OCI-LY7 (cell line): ENCODE measurements at regions of chr2 and their contacts with region 1.

Region 1: GRCh38 chr2:60353406-60353800 is 200.1 kb downstream of the BCL11A start:
- DNase-seq: peak; percentile 78
- H3K4me3 ChIP-seq: peak overlapping the region; percentile 61
- H3K27ac ChIP-seq: peak overlapping the region; percentile 98
- H3K4me1 ChIP-seq: peaks cover 97% of the 10 kb centered on the region
- CTCF ChIP-seq: peak; percentile 56

Region 2: GRCh38 chr2:60213865-60214625 is 139.4 kb before region 1 on chr2:
- CTCF ChIA-PET with region 1: no interaction called
- POLR2A ChIA-PET with region 1: no interaction called
- intact Hi-C with region 1: no loop called
- DNase-seq: no peak
- H3K4me3 ChIP-seq: no peak overlapping the region
- H3K27ac ChIP-seq: no peak overlapping the region
- H3K4me1 ChIP-seq: no peaks in the 10 kb centered on the region
- CTCF ChIP-seq: no peak

Region 3: DNA sequence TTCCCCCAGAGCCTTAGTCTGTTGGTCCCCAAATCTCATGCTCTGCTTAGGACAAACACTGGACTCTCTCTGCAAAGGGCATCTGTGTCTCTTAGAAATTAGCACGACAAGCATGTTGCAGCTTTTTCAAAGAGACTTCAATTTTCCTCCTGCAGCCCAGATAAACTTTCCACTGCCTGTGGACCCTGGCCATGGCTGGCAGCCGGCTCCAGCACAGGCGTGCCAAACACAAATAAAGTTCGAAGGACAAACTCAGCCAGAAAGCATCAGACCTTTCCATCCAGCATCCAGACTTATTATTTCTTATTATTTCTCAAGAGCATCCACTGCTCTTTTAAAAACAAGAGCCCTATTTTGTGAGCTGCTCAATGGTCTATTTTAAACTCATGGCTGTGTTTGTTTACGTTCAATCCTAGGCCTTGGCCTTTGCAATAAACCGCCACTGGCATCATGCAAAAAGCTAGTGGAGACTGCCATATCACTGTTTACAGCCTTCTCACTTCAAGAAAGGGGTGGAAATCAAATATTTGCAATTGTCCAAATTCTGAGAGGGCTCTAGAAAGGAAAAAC is 100.7 kb before region 1 on chr2:
- CTCF ChIA-PET with region 1: no interaction called
- POLR2A ChIA-PET with region 1: no interaction called
- intact Hi-C with region 1: no loop called
- DNase-seq: no peak
- H3K4me3 ChIP-seq: no peak overlapping the region
- H3K27ac ChIP-seq: no peak overlapping the region
- H3K4me1 ChIP-seq: no peaks in the 10 kb centered on the region
- CTCF ChIP-seq: no peak

Region 4: GRCh38 chr2:60312618-60313017 is 40.8 kb before region 1 on chr2:
- CTCF ChIA-PET with region 1: interaction called, 5 read pairs
- POLR2A ChIA-PET with region 1: interaction called, 80 read pairs
- intact Hi-C with region 1: no loop called
- DNase-seq: no peak
- H3K4me3 ChIP-seq: no peak overlapping the region
- H3K27ac ChIP-seq: peak overlapping the region; percentile 41
- H3K4me1 ChIP-seq: peaks cover 100% of the 10 kb centered on the region
- CTCF ChIP-seq: no peak

Region 5: GRCh38 chr2:60337140-60337494 is 16.3 kb before region 1 on chr2:
- CTCF ChIA-PET with region 1: interaction called, 4 read pairs
- POLR2A ChIA-PET with region 1: interaction called, 76 read pairs
- intact Hi-C with region 1: no loop called
- DNase-seq: peak; percentile 54
- H3K4me3 ChIP-seq: no peak overlapping the region
- H3K27ac ChIP-seq: peak overlapping the region; percentile 64
- H3K4me1 ChIP-seq: peaks cover 24% of the 10 kb centered on the region
- CTCF ChIP-seq: peak; percentile 51

Region 6: GRCh38 chr2:60439219-60439974 is 86.0 kb after region 1 on chr2:
- CTCF ChIA-PET with region 1: interaction called, 14 read pairs
- POLR2A ChIA-PET with region 1: interaction called, 34 read pairs
- intact Hi-C with region 1: loop called (anchors 1 kb)
- DNase-seq: peak; percentile 96
- H3K4me3 ChIP-seq: peak overlapping the region; percentile 41
- H3K27ac ChIP-seq: peak overlapping the region; percentile 65
- H3K4me1 ChIP-seq: peaks cover 66% of the 10 kb centered on the region
- CTCF ChIP-seq: peak; percentile 77

Region 7: DNA sequence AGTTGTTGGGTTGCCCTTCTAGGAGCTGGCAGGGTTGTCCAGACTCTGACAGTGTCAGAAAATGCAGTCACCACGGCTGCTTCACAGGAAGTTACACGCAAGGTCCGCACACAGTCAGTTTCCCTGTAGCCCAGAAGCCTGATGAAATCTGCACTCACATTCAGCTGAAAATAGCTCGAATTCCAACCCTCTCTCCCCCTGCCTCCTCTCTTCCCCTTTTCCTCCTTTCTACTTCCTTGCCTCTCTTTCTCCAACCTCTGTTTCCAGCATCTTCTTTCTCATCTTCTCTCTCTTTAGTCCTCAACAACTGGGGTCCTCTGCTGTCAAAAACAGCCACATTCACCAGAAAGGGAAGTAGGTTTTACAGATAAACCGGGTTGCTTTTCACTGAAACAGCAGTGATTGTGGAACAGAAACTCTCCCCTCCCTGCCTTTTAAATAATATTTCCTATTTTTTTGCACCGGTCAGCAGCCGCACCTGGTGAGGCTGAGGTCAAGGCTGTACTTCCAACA is 130.8 kb after region 1 on chr2:
- CTCF ChIA-PET with region 1: interaction called, 3 read pairs
- POLR2A ChIA-PET with region 1: no interaction called
- intact Hi-C with region 1: loop called (anchors 1 kb)
- DNase-seq: peak; percentile 80
- H3K4me3 ChIP-seq: peak overlapping the region; percentile 51
- H3K27ac ChIP-seq: peak overlapping the region; percentile 82
- H3K4me1 ChIP-seq: peaks cover 45% of the 10 kb centered on the region
- CTCF ChIP-seq: peak; percentile 26; the same call in 1 of the 2 replicates

Region 8: DNA sequence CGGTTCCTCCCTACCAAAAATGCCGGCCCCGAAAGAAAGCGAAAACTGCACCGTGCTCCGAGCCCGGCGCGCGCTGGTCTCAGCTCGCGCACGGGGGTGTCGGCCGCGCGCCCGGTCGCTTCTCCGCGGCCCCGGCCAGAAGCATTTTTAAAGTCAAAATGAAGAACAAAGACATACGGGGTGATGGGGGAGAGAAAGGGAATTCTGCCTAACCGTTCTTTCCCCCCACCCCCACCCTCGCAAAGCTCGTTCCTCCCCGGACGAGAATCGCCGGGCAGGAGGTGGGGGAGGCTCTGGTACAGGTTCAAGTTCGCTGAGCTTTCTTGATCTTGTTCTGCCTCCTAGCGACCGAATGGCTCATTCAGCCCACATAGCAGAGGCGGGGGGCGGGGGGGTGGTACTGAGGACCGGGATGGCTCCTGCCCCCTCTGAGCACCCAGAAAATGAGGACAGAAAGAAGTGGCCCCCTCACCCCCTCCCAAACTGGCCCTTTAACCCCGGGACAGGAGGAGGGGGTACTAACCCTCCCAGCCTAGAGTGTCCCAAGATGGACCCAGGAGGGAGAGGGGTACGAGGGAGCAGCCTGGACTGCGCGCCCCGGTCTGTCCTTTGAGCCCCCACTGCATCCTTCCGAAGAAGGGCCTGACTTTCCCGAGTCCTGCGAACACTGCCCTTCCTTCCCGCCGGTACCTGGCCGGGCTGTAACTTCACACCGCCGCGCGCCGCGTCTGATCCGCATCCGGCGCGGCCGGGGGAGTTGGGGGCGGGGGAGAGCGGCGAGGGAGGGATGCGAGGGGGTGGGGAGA is 197.0 kb after region 1 on chr2:
- CTCF ChIA-PET with region 1: interaction called, 14 read pairs
- POLR2A ChIA-PET with region 1: interaction called, 31 read pairs
- intact Hi-C with region 1: loop called (anchors 1 kb)
- DNase-seq: peak; percentile 91
- H3K4me3 ChIP-seq: peak overlapping the region; percentile 93
- H3K27ac ChIP-seq: peak overlapping the region; percentile 90
- H3K4me1 ChIP-seq: peaks cover 31% of the 10 kb centered on the region
- CTCF ChIP-seq: peak; percentile 89